B cell (primary cell): ENCODE measurements at regions of chr2 and their contacts with region 1.

Region 1: GRCh38 chr2:235746257-235747084 is 252.6 kb downstream of the AGAP1 start:
- DNase-seq: peak; percentile 51
- ATAC-seq: peak; percentile 54
- H3K4me3 ChIP-seq: no peak overlapping the region
- H3K4me3 Mint-ChIP-seq: no peak overlapping the region
- H3K27ac ChIP-seq: no peak overlapping the region
- H3K27ac Mint-ChIP-seq: no peak overlapping the region
- H3K4me1 ChIP-seq: no peaks in the 10 kb centered on the region
- H3K4me1 Mint-ChIP-seq: no peaks in the 10 kb centered on the region
- H3K27me3 ChIP-seq: peaks cover 0 to 2% (median 0%) of the 10 kb centered on the region in 4 experiments
- H3K27me3 Mint-ChIP-seq: peaks cover 21% of the 10 kb centered on the region
- CTCF ChIP-seq: peak; percentile 77

Region 2: DNA sequence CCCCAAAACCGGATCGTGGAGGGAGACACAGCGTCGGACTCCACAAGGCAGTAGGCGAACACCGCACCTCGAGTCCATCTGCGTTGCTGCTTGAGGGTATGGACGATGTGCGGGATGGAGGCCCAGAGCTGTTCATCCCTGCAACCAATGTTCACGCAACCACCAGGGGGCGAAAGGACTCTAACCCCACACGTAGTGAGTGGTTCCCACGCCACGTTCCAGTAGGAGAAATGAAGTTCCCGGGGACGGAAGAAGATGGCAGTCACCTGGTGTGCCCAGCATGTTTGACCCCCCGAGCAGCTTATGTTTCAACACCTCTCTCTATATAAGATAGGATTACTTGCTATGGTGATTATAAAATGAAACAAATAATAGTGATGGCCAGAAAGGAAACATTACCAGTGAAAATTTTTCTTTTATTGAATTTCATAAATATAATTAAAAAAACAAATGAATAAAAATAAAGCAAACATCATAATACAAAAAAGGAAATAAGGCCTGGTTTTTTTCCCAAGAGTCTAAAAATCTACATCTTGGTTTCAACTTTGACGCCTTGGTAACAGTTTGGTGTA is 610.4 kb before region 1 on chr2:
- CTCF ChIA-PET with region 1: interaction called, 4 read pairs
- POLR2A ChIA-PET with region 1: no interaction called
- intact Hi-C with region 1: loop called (anchors 5 kb)
- DNase-seq: peak; percentile 36
- ATAC-seq: no peak
- H3K4me3 ChIP-seq: no peak overlapping the region
- H3K4me3 Mint-ChIP-seq: no peak overlapping the region
- H3K27ac ChIP-seq: no peak overlapping the region
- H3K27ac Mint-ChIP-seq: no peak overlapping the region
- H3K4me1 ChIP-seq: no peaks in the 10 kb centered on the region
- H3K4me1 Mint-ChIP-seq: no peaks in the 10 kb centered on the region
- H3K27me3 ChIP-seq: peaks cover 0 to 12% (median 0%) of the 10 kb centered on the region in 4 experiments
- H3K27me3 Mint-ChIP-seq: peaks cover 37% of the 10 kb centered on the region
- CTCF ChIP-seq: peak; percentile 64

Region 3: DNA sequence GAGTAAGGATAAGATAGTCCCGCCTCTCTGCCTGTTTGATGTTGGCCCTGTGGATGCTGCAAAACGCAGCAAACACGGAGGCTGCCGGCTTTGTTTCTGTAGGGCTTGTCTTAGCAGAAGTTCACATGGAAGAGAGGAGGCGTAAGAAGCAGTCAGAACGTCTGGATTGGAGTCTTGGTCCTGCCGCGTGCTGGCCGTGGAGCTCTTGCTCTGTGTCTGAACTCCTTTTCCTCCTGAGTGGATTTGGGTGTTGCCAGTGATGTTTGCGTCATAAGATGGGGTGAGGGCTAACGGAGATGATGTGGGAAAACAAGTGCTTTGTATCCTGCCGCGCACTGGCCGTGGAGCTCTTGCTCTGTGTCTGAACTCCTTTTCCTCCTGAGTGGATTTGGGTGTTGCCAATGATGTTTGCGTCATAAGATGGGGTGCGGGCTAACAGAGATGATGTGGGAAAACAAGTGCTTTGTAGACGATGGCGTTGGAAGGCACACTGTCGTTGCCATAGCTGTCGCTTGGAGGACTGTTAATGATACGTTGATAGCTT is 11.7 kb before region 1 on chr2:
- CTCF ChIA-PET with region 1: interaction called, 11 read pairs
- POLR2A ChIA-PET with region 1: no interaction called
- intact Hi-C with region 1: no loop called
- DNase-seq: no peak
- ATAC-seq: no peak
- H3K4me3 ChIP-seq: no peak overlapping the region
- H3K4me3 Mint-ChIP-seq: no peak overlapping the region
- H3K27ac ChIP-seq: no peak overlapping the region
- H3K27ac Mint-ChIP-seq: no peak overlapping the region
- H3K4me1 ChIP-seq: no peaks in the 10 kb centered on the region
- H3K4me1 Mint-ChIP-seq: no peaks in the 10 kb centered on the region
- H3K27me3 ChIP-seq: no peaks in the 10 kb centered on the region
- H3K27me3 Mint-ChIP-seq: peaks cover 8% of the 10 kb centered on the region
- CTCF ChIP-seq: no peak